Activated CD8-positive, alpha-beta T cell treated with anti-CD3 and anti-CD28 coated beads for 36 hours (primary cell): ENCODE measurements at regions of chr12 and their contacts with region 1.

Region 1: GRCh38 chr12:57462251-57462911 is 2.8 kb downstream of the GLI1 start:
- DNase-seq: peak; percentile 94
- ATAC-seq: peak; percentile 78
- H3K4me3 Mint-ChIP-seq: peak overlapping the region; percentile 83
- H3K27ac Mint-ChIP-seq: peak overlapping the region; percentile 88
- H3K4me1 Mint-ChIP-seq: peaks cover 40% of the 10 kb centered on the region
- H3K27me3 Mint-ChIP-seq: peaks cover 4% of the 10 kb centered on the region
- CTCF ChIP-seq: peak; percentile 89

Region 2: DNA sequence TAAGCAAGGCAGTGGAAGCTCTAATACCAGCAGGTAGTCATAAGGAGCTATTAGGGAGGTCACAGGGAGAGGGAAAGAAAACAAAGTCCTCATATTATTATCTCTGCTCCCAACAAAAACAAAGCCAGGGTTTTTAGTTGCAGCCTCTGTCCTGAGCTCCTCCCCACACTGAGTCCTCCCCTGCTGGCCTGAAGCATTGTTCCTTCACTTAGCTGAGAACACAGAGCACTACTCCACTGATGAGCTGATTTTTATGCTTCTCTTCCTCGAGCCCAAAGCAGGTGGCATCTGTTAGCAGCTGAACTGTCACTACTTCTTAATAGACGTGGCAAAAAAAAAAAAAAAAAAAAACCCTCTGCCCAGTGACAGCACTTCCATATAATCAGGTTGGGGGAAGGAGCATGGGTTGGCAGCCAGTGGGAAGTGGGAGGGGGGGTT is 200.9 kb before region 1 on chr12:
- CTCF ChIA-PET with region 1: interaction called, 22 read pairs
- POLR2A ChIA-PET with region 1: no interaction called
- intact Hi-C with region 1: loop called (anchors 5 kb)
- DNase-seq: no peak
- ATAC-seq: no peak
- H3K4me3 Mint-ChIP-seq: no peak overlapping the region
- H3K27ac Mint-ChIP-seq: no peak overlapping the region
- H3K4me1 Mint-ChIP-seq: peaks cover 4% of the 10 kb centered on the region
- H3K27me3 Mint-ChIP-seq: no peaks in the 10 kb centered on the region
- CTCF ChIP-seq: no peak

Region 3: GRCh38 chr12:57430931-57431720 is 31.3 kb before region 1 on chr12 and contains the start of gene R3HDM2:
- CTCF ChIA-PET with region 1: interaction called, 29 read pairs
- POLR2A ChIA-PET with region 1: interaction called, 3 read pairs
- intact Hi-C with region 1: no loop called
- DNase-seq: peak; percentile 97
- ATAC-seq: peak; percentile 94
- H3K4me3 Mint-ChIP-seq: peak within 1 kb of the TSS; percentile 98
- H3K27ac Mint-ChIP-seq: peak within 1 kb of the TSS; percentile 100
- H3K4me1 Mint-ChIP-seq: peaks cover 41% of the 10 kb centered on the region
- H3K27me3 Mint-ChIP-seq: no peaks in the 10 kb centered on the region
- CTCF ChIP-seq: no peak
- total RNA-seq, gene R3HDM2: 33.2 to 44.0 TPM

Region 4: DNA sequence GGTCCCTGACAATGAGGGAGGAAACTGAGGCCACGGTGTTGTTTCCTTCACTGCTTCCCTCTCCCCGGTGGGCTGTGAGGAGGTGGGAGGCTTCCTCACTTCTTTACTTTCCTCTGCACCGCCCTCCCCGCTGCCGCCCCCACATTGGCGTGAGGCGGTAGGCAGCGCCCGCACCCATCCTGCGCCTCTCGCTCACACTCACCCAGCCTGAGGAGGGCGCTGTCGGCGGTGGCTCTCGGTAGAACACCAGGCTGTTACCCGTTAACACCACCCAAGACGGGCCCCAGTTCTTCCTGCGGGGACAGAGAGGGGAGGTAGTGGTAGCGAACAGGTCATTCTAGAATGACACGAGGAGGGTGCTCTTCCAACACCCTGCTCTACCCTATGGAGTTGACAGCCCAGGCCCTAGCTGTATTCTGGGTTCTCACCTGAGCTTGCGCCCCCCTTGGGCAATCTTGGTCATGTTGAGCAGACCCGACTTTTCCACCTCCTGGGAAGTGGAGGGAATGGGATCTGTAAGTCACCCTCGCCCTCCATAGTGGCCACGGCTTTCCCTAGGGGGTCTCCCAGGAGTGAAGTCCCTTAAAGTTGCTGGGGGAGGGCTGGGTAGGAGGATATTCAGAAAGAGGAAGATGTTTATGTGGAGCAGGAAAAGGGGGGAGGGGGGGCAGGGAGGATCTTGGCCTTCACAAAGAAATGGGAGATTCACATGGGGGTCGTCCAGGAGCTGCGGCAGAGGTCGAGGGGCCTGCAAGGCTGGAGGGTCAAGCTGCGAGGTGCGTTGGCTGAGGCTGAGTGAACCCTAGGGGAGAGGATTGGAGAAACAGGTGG is 14.0 kb after region 1 on chr12:
- CTCF ChIA-PET with region 1: interaction called, 152 read pairs
- POLR2A ChIA-PET with region 1: interaction called, 50 read pairs
- intact Hi-C with region 1: no loop called
- DNase-seq: peak; percentile 93
- ATAC-seq: peak; percentile 67
- H3K4me3 Mint-ChIP-seq: peak overlapping the region; percentile 89
- H3K27ac Mint-ChIP-seq: peak overlapping the region; percentile 99
- H3K4me1 Mint-ChIP-seq: peaks cover 58% of the 10 kb centered on the region
- H3K27me3 Mint-ChIP-seq: no peaks in the 10 kb centered on the region
- CTCF ChIP-seq: peak; percentile 95

Region 5: DNA sequence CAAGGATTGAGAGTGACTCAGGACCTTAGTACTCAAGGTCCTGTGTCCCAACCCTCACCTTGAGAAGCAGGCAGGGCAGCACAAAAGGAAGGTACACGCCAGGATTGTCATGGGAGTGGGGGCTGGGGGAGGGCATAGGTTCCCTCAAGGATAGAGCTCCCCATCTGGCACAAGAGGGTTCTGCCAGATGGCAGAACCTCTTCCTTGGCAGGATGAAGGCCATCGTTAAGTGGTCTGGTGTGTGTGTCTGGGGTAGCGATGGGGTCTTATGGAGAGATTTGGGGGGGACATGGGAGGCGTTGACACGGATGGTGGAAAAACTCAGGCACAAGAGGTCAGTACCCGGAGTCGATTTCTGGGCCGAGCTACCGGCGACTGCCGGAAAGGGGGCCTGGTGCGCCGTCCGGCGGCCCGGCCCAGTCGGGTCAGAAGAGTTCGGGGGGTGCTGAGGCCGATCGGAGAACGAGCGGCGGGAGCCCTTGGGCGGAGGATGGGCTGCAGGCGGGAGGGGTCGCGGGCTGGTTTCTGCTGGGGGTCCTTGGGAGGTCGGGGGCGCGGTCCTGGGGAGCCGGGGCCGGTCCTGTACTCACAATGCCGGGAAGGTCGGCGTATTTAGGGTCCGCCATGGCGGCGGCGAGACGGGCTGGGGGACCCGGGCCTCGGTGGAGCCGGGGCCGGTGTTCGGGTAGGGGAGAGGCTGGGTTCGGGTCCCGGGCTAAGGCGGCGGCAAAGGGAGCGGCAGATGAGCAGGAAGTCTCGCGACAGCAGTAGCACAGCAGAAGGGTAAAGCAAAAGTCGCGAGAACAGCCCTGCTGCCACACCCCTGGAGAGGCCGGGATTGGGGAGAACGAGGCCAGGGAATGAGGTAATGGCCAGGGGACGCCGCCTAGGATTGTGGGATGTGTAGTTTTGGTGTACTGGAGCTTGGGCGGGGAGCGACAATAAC is 84.3 kb after region 1 on chr12 and contains the start of gene DCTN2:
- CTCF ChIA-PET with region 1: no interaction called
- POLR2A ChIA-PET with region 1: no interaction called
- intact Hi-C with region 1: no loop called
- DNase-seq: peak; percentile 98
- ATAC-seq: peak; percentile 96
- H3K4me3 Mint-ChIP-seq: peak within 1 kb of the TSS; percentile 95
- H3K27ac Mint-ChIP-seq: peak within 1 kb of the TSS; percentile 94
- H3K4me1 Mint-ChIP-seq: peaks cover 45% of the 10 kb centered on the region
- H3K27me3 Mint-ChIP-seq: peaks cover 4% of the 10 kb centered on the region
- CTCF ChIP-seq: no peak
- total RNA-seq, gene DCTN2: 66.2 to 68.6 TPM

Region 6: GRCh38 chr12:57918147-57918546 is 455.8 kb after region 1 on chr12:
- CTCF ChIA-PET with region 1: no interaction called
- POLR2A ChIA-PET with region 1: no interaction called
- intact Hi-C with region 1: no loop called
- DNase-seq: no peak
- ATAC-seq: no peak
- H3K4me3 Mint-ChIP-seq: no peak overlapping the region
- H3K27ac Mint-ChIP-seq: no peak overlapping the region
- H3K4me1 Mint-ChIP-seq: no peaks in the 10 kb centered on the region
- H3K27me3 Mint-ChIP-seq: no peaks in the 10 kb centered on the region
- CTCF ChIP-seq: no peak

Region 7: GRCh38 chr12:58540480-58541299 is 1078.3 kb after region 1 on chr12:
- CTCF ChIA-PET with region 1: no interaction called
- POLR2A ChIA-PET with region 1: no interaction called
- intact Hi-C with region 1: no loop called
- DNase-seq: peak; percentile 30
- ATAC-seq: peak; percentile 42
- H3K4me3 Mint-ChIP-seq: no peak overlapping the region
- H3K27ac Mint-ChIP-seq: no peak overlapping the region
- H3K4me1 Mint-ChIP-seq: no peaks in the 10 kb centered on the region
- H3K27me3 Mint-ChIP-seq: peaks cover 3% of the 10 kb centered on the region
- CTCF ChIP-seq: peak; percentile 39